AG04450 (cell line): ENCODE measurements at regions of chr2 and their contacts with region 1.

Region 1: GRCh38 chr2:102240640-102241370 is 54.0 kb downstream of the IL1RL2 start:
- DNase-seq: peak; percentile 86
- H3K4me3 ChIP-seq: no peak overlapping the region
- H3K27ac ChIP-seq: peak overlapping the region; percentile 49
- H3K27me3 ChIP-seq: no peaks in the 10 kb centered on the region
- CTCF ChIP-seq: peak; percentile 99

Region 2: GRCh38 chr2:101900375-101900774 is 340.4 kb before region 1 on chr2:
- CTCF ChIA-PET with region 1: interaction called, 12 read pairs
- POLR2A ChIA-PET with region 1: no interaction called
- DNase-seq: no peak
- H3K4me3 ChIP-seq: no peak overlapping the region
- H3K27ac ChIP-seq: no peak overlapping the region
- H3K27me3 ChIP-seq: no peaks in the 10 kb centered on the region
- CTCF ChIP-seq: no peak

Region 3: GRCh38 chr2:102020596-102021181 is 220.1 kb before region 1 on chr2:
- CTCF ChIA-PET with region 1: interaction called, 87 read pairs
- POLR2A ChIA-PET with region 1: interaction called, 6 read pairs
- DNase-seq: peak; percentile 69
- H3K4me3 ChIP-seq: no peak overlapping the region
- H3K27ac ChIP-seq: no peak overlapping the region
- H3K27me3 ChIP-seq: no peaks in the 10 kb centered on the region
- CTCF ChIP-seq: peak; percentile 99

Region 4: GRCh38 chr2:102166189-102166845 is 74.5 kb before region 1 on chr2:
- CTCF ChIA-PET with region 1: interaction called, 37 read pairs
- POLR2A ChIA-PET with region 1: interaction called, 3 read pairs
- DNase-seq: no peak
- H3K4me3 ChIP-seq: no peak overlapping the region
- H3K27ac ChIP-seq: no peak overlapping the region
- H3K27me3 ChIP-seq: no peaks in the 10 kb centered on the region
- CTCF ChIP-seq: peak; percentile 64

Region 5: GRCh38 chr2:102251042-102251848 is 10.4 kb after region 1 on chr2:
- CTCF ChIA-PET with region 1: interaction called, 34 read pairs
- POLR2A ChIA-PET with region 1: no interaction called
- DNase-seq: no peak
- H3K4me3 ChIP-seq: peak overlapping the region; percentile 46
- H3K27ac ChIP-seq: no peak overlapping the region
- H3K27me3 ChIP-seq: no peaks in the 10 kb centered on the region
- CTCF ChIP-seq: peak; percentile 50

Region 6: GRCh38 chr2:102355526-102356380 is 114.9 kb after region 1 on chr2 and contains the start of gene IL18R1:
- CTCF ChIA-PET with region 1: interaction called, 22 read pairs
- POLR2A ChIA-PET with region 1: no interaction called
- DNase-seq: peak; percentile 29
- H3K4me3 ChIP-seq: peak within 1 kb of the TSS; percentile 76
- H3K27ac ChIP-seq: no peak within 1 kb of the TSS
- H3K27me3 ChIP-seq: no peaks in the 10 kb centered on the region
- CTCF ChIP-seq: peak; percentile 70
- polyA plus RNA-seq, gene IL18R1: 2.0 and 2.5 TPM in 2 replicates

Region 7: GRCh38 chr2:102432386-102432785 is 191.6 kb after region 1 on chr2:
- CTCF ChIA-PET with region 1: no interaction called
- POLR2A ChIA-PET with region 1: no interaction called
- DNase-seq: no peak
- H3K4me3 ChIP-seq: no peak overlapping the region
- H3K27ac ChIP-seq: no peak overlapping the region
- H3K27me3 ChIP-seq: no peaks in the 10 kb centered on the region
- CTCF ChIP-seq: no peak